ENCODE measurements at regions of chr6 and their contacts with region 1.

Region 1: GRCh38 chr6:159979136-159979874 is 10.4 kb downstream of the IGF2R start:
- DNase-seq: peak; percentile 82
- ATAC-seq: peak; percentile 76
- H3K4me3 ChIP-seq: peak overlapping the region in 1 of 3 experiments; percentile 27; a peak in 2 of 6 replicates
- H3K27ac ChIP-seq: peak overlapping the region; percentile 59
- H3K4me1 ChIP-seq: peaks cover 87% of the 10 kb centered on the region
- H3K27me3 ChIP-seq: no peaks in the 10 kb centered on the region
- CTCF ChIP-seq: no peak
- EP300 ChIP-seq: no peak
- POLR2A ChIP-seq: no peak
- RAD21 ChIP-seq: no peak; the same call in 1 of the 2 replicates

Region 2: DNA sequence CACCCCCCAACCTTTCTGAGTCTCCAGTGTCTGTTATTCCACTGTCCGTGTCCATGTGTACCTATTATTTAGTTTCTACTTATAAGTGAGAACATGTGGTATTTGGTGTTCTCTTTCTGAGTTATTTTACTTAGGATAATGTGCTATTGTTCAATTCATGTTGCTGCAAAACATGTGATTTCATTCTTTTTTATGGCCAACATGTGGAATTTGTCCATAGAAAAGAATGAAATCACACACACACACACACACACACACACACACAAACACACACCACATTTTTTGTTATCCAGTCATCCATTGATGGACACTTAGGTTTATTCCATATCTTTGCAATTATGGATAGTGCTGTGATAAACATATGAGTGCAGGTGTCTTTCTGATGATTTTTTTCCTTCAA is 13.1 kb after region 1 on chr6:
- CTCF ChIA-PET with region 1: no interaction called
- POLR2A ChIA-PET with region 1: no interaction called
- in situ Hi-C with region 1: no loop called
- intact Hi-C with region 1: loop called (anchors 2 kb)
- DNase-seq: no peak
- ATAC-seq: no peak
- H3K4me3 ChIP-seq: no peak overlapping the region
- H3K27ac ChIP-seq: no peak overlapping the region
- H3K4me1 ChIP-seq: peaks cover 72% of the 10 kb centered on the region
- H3K27me3 ChIP-seq: no peaks in the 10 kb centered on the region
- CTCF ChIP-seq: no peak
- EP300 ChIP-seq: no peak
- POLR2A ChIP-seq: no peak
- RAD21 ChIP-seq: no peak

Region 3: GRCh38 chr6:160041608-160042007 is 62.3 kb after region 1 on chr6:
- CTCF ChIA-PET with region 1: no interaction called
- POLR2A ChIA-PET with region 1: no interaction called
- in situ Hi-C with region 1: loop called (anchors 5 kb)
- intact Hi-C with region 1: loop called (anchors 5 kb)
- DNase-seq: peak; percentile 22
- ATAC-seq: peak; percentile 51
- H3K4me3 ChIP-seq: no peak overlapping the region
- H3K27ac ChIP-seq: peak overlapping the region; percentile 68
- H3K4me1 ChIP-seq: peaks cover 34% of the 10 kb centered on the region
- H3K27me3 ChIP-seq: no peaks in the 10 kb centered on the region
- CTCF ChIP-seq: 0 out of 2 replicates have a peak, but pooled peaks have one; percentile 19
- EP300 ChIP-seq: no peak
- POLR2A ChIP-seq: no peak
- RAD21 ChIP-seq: peak; percentile 31; the same call in 1 of the 2 replicates

Region 4: DNA sequence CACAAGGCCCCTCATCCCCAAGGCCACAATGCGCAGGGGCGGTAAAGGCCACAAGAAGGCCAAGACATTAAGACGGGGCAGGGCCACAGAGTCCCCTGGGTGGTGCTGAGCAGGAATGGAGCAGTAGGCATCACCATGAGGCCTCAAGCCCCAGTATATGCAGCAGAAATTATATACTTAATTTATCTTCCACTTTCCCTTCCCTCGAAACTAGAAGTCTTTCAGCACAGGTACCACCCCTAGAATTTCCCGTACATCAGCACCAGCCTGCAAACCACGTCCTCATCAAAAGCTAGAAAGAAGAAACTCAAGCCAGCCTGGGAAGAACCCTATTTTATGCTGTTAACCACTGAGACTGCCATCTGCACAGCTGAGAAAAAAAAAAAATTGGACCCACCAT is 812.2 kb after region 1 on chr6:
- CTCF ChIA-PET with region 1: no interaction called
- POLR2A ChIA-PET with region 1: no interaction called
- in situ Hi-C with region 1: no loop called
- intact Hi-C with region 1: no loop called
- DNase-seq: no peak
- ATAC-seq: no peak
- H3K4me3 ChIP-seq: no peak overlapping the region
- H3K27ac ChIP-seq: no peak overlapping the region
- H3K4me1 ChIP-seq: no peaks in the 10 kb centered on the region
- H3K27me3 ChIP-seq: no peaks in the 10 kb centered on the region
- CTCF ChIP-seq: no peak
- EP300 ChIP-seq: no peak
- POLR2A ChIP-seq: no peak
- RAD21 ChIP-seq: no peak

Measured in HepG2 (cell line).